ENCODE measurements at regions of chr3 and their contacts with region 1.

Region 1: DNA sequence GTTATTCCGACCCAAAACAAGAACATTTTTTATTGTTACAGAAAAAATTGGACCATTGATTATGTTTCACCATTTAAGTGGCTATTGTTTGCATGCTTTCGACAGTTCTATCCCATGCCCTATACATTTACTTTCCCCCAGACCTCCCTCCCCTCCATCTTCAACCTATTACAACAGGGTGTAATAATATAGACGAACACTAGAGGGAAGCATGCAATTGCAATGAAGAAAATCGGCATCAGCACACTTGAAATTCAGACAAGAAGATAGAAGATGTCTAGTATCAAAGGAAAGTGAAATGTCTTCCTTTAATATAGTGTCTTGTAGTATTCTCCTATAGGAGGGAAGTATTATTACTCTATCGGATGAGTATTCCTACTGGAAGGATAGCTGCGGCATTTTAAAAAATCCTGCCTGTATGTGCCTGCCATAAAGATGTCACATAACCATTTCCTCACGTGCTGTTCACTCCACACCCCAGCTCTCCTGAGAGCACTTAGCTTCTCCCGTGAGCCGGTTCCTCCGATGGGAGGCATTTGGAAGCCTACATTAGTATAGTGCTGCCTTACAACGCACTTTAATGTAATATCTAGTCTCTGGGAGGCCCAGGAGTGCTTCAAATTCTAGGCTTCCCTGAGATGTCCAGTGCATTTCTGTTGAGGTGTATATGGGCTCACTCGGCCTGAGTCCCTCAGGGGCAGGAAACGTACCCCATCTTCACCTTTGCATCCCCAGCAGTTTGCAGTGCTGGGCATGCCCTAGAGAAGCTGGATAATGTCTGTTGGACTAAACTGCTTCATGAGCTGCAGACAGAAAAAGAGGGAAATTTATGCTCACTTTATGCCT is 17.8 kb upstream of the ERICH6 start:
- DNase-seq: no peak
- H3K4me3 ChIP-seq: no peak overlapping the region
- H3K27me3 ChIP-seq: no peaks in the 10 kb centered on the region
- CTCF ChIP-seq: peak; percentile 71

Region 2: GRCh38 chr3:150703299-150704134 is 18.0 kb before region 1 on chr3 and contains the start of gene ERICH6:
- CTCF ChIA-PET with region 1: interaction called, 27 read pairs
- POLR2A ChIA-PET with region 1: no interaction called
- DNase-seq: peak; percentile 44
- H3K4me3 ChIP-seq: peak within 1 kb of the TSS; percentile 54
- H3K27me3 ChIP-seq: no peaks in the 10 kb centered on the region
- CTCF ChIP-seq: no peak
- polyA plus RNA-seq, gene ERICH6: not detected in 2 replicates

Region 3: DNA sequence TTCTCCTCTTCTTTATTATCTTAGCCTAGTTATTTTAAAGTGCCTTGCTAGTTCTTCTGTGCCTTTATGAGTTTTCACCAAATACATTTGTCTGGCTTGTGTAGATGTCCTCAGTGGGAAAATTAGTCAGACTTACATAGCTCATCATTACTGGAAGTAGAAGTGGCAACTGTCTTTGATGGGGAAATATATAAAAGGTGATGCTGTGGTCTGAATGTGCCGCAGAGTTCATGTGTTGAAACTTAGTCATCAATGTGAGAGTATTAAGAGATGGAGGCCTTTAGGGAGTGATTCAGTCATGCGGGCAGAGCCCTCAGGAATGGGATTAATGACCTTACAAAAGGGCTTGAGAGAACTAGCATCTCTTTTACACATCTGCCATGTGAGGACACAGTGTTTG is 11.4 kb before region 1 on chr3:
- CTCF ChIA-PET with region 1: interaction called, 27 read pairs
- POLR2A ChIA-PET with region 1: no interaction called
- DNase-seq: no peak
- H3K4me3 ChIP-seq: no peak overlapping the region
- H3K27me3 ChIP-seq: no peaks in the 10 kb centered on the region
- CTCF ChIP-seq: no peak

Region 4: DNA sequence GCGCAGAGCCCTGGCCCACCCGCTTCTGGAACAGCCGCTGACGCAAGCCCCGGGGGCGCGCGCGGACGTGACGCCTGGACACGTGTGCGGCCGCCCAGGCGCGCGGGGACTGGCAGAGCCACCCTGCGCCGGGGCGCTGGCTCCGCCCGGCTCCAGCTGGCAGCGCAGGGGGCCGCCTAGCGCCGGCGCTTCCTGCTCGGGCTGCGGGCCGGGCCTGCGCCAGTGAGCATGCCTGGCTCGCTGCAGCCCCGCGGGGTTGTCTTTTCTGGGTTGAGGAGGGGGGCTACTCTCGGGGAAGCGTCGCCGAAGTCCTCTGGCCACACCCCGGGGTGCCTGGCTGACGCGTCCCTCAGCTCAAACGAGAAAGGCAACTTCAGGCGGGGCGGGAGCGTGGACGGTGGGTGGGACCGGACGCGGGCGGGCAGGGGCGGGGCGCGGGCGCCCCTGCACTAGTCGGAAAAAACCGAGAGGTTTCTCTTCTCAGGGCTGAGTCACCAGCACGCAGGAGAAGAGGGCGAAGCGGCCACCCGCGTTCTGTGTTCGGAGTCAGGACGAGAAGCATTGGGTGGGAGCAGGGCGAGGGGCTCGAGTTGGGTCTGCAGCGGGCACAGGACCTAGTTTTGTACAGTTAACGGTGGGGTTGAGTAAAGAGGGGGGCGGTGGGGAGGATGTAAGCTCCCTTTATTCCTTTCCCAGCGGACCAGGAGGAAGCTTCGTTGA is 41.8 kb after region 1 on chr3 and contains the start of gene SIAH2:
- CTCF ChIA-PET with region 1: interaction called, 12 read pairs
- POLR2A ChIA-PET with region 1: no interaction called
- DNase-seq: peak; percentile 78
- H3K4me3 ChIP-seq: peak within 1 kb of the TSS; percentile 59
- H3K27me3 ChIP-seq: no peaks in the 10 kb centered on the region
- CTCF ChIP-seq: no peak
- polyA plus RNA-seq, gene SIAH2: 34.2 and 39.3 TPM in 2 replicates

Region 5: GRCh38 chr3:150861851-150862250 is 140.3 kb after region 1 on chr3:
- CTCF ChIA-PET with region 1: interaction called, 45 read pairs
- POLR2A ChIA-PET with region 1: no interaction called
- DNase-seq: no peak
- H3K4me3 ChIP-seq: no peak overlapping the region
- H3K27me3 ChIP-seq: no peaks in the 10 kb centered on the region; the same call in 1 of the 2 replicates
- CTCF ChIP-seq: no peak

Region 6: DNA sequence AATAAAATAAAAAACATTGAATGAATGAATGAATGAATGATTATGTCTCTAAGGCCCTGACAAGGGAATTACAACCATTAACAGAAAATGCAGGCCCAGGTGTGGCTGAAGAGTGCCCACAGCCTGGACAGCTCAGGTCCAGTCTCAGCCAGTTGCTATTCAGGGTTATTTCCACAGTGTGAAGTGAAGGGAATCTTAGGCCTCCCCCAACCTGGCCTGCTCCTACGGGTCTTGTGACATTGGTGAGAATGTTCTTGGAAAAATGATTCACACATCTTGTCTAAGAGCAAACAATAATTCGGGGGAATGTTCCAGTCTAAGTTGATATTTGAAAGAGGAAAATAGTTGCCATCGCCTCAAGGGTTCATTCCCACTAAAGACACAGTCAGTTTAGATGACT is 146.8 kb after region 1 on chr3:
- CTCF ChIA-PET with region 1: interaction called, 45 read pairs
- POLR2A ChIA-PET with region 1: no interaction called
- DNase-seq: no peak
- H3K4me3 ChIP-seq: no peak overlapping the region
- H3K27me3 ChIP-seq: no peaks in the 10 kb centered on the region; the same call in 1 of the 2 replicates
- CTCF ChIP-seq: no peak

Region 7: DNA sequence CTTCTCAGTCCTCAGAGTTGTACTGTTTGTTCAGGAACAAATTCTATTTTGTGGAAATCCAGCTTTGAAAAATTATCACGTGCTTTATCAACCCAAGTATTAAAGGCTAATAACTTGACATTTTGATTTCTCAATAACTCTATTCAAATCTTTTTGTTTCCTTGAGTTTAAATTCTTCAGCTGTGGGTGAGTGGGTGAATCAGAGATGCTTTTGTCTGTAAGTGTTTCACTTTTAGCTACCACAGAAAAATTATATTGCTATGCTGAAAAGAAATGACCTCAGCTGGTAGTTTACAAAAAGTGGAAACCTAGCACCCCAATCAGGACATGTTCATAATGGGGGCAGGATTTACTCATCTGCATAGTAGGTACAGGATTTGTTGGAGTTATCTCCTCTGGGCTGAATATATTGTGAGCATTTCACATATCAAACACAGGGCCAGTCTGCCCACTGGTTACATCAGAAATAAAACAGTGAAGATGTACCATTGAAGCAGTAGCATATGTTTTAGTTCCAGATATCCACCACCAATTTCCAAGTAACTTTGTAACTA is 153.2 kb after region 1 on chr3:
- CTCF ChIA-PET with region 1: interaction called, 13 read pairs
- POLR2A ChIA-PET with region 1: interaction called, 3 read pairs
- DNase-seq: no peak
- H3K4me3 ChIP-seq: no peak overlapping the region
- H3K27me3 ChIP-seq: no peaks in the 10 kb centered on the region; the same call in 1 of the 2 replicates
- CTCF ChIP-seq: no peak

Measured in BJ (cell line).